ENCODE measurements at regions of chr11 and their contacts with region 1.

Region 1: GRCh38 chr11:134068829-134069425 is at the start of gene JAM3:
- DNase-seq: peak; percentile 95
- H3K4me3 ChIP-seq: peak within 1 kb of the TSS; percentile 79 to 89 (median 84)
- H3K27ac ChIP-seq: peak within 1 kb of the TSS; percentile 91 to 98 (median 95)
- H3K4me1 ChIP-seq: peaks cover 14 to 49% (median 42%) of the 10 kb centered on the region in 4 donors
- H3K27me3 ChIP-seq: no peaks in the 10 kb centered on the region
- CTCF ChIP-seq: no peak
- EP300 ChIP-seq: no peak
- POLR2A ChIP-seq: peak; percentile 70
- total RNA-seq, gene JAM3: 84.2 to 122 (median 96.5) TPM

Region 2: GRCh38 chr11:134119094-134119493 is 50.2 kb after region 1 on chr11:
- intact Hi-C with region 1: loop called (anchors 5 kb)
- DNase-seq: no peak
- H3K4me3 ChIP-seq: no peak overlapping the region
- H3K27ac ChIP-seq: peak overlapping the region; percentile 86 to 92 (median 90)
- H3K4me1 ChIP-seq: peaks cover 33 to 82% (median 77%) of the 10 kb centered on the region in 4 donors
- H3K27me3 ChIP-seq: no peaks in the 10 kb centered on the region
- CTCF ChIP-seq: no peak
- EP300 ChIP-seq: no peak
- POLR2A ChIP-seq: no peak

Region 3: GRCh38 chr11:134124660-134125451 is 55.9 kb after region 1 on chr11:
- intact Hi-C with region 1: loop called (anchors 5 kb)
- DNase-seq: no peak
- H3K4me3 ChIP-seq: peak overlapping the region; percentile 56 to 59 (median 58)
- H3K27ac ChIP-seq: peak overlapping the region; percentile 78 to 92 (median 86)
- H3K4me1 ChIP-seq: peaks cover 42 to 70% (median 68%) of the 10 kb centered on the region in 4 donors
- H3K27me3 ChIP-seq: no peaks in the 10 kb centered on the region
- CTCF ChIP-seq: peak in 1 of 3 experiments; percentile 12
- EP300 ChIP-seq: no peak
- POLR2A ChIP-seq: no peak

Region 4: GRCh38 chr11:134139873-134140331 is 71.0 kb after region 1 on chr11:
- intact Hi-C with region 1: loop called (anchors 2 kb)
- DNase-seq: no peak
- H3K4me3 ChIP-seq: peak overlapping the region in 3 of 4 donors; percentile 10 to 18 (median 17)
- H3K27ac ChIP-seq: peak overlapping the region; percentile 71 to 82 (median 78)
- H3K4me1 ChIP-seq: peaks cover 9 to 17% (median 15%) of the 10 kb centered on the region in 4 donors
- H3K27me3 ChIP-seq: no peaks in the 10 kb centered on the region
- CTCF ChIP-seq: peak; percentile 84 to 94 (median 90)
- EP300 ChIP-seq: no peak
- POLR2A ChIP-seq: no peak